ENCODE measurements at regions of chr3 and their contacts with region 1.

Region 1: GRCh38 chr3:138935848-138936740 is 10.8 kb downstream of the FOXL2 start:
- DNase-seq: peak; percentile 31
- H3K4me3 ChIP-seq: peak overlapping the region; percentile 59
- H3K27ac ChIP-seq: no peak overlapping the region
- H3K4me1 ChIP-seq: peaks cover 6% of the 10 kb centered on the region
- CTCF ChIP-seq: peak; percentile 74

Region 2: GRCh38 chr3:138479438-138479863 is 456.6 kb before region 1 on chr3:
- CTCF ChIA-PET with region 1: interaction called, 3 read pairs
- POLR2A ChIA-PET with region 1: interaction called, 10 read pairs
- intact Hi-C with region 1: no loop called
- DNase-seq: peak; percentile 70
- H3K4me3 ChIP-seq: no peak overlapping the region
- H3K27ac ChIP-seq: no peak overlapping the region
- H3K4me1 ChIP-seq: no peaks in the 10 kb centered on the region
- CTCF ChIP-seq: peak; percentile 89

Region 3: GRCh38 chr3:138923531-138923994 is 12.5 kb before region 1 on chr3:
- CTCF ChIA-PET with region 1: interaction called, 12 read pairs
- POLR2A ChIA-PET with region 1: interaction called, 4 read pairs
- intact Hi-C with region 1: no loop called
- DNase-seq: peak; percentile 81
- H3K4me3 ChIP-seq: no peak overlapping the region
- H3K27ac ChIP-seq: no peak overlapping the region
- H3K4me1 ChIP-seq: no peaks in the 10 kb centered on the region
- CTCF ChIP-seq: peak; percentile 91

Region 4: GRCh38 chr3:139101396-139101795 is 165.3 kb after region 1 on chr3:
- CTCF ChIA-PET with region 1: no interaction called
- POLR2A ChIA-PET with region 1: no interaction called
- intact Hi-C with region 1: no loop called
- DNase-seq: peak; percentile 28
- H3K4me3 ChIP-seq: no peak overlapping the region
- H3K27ac ChIP-seq: no peak overlapping the region
- H3K4me1 ChIP-seq: no peaks in the 10 kb centered on the region
- CTCF ChIP-seq: no peak

Region 5: GRCh38 chr3:139111392-139112229 is 175.5 kb after region 1 on chr3:
- CTCF ChIA-PET with region 1: interaction called, 10 read pairs
- POLR2A ChIA-PET with region 1: no interaction called
- intact Hi-C with region 1: no loop called
- DNase-seq: peak; percentile 39
- H3K4me3 ChIP-seq: no peak overlapping the region
- H3K27ac ChIP-seq: no peak overlapping the region
- H3K4me1 ChIP-seq: no peaks in the 10 kb centered on the region
- CTCF ChIP-seq: peak; percentile 82

Measured in OCI-LY7 (cell line).